ENCODE measurements at regions of chr3 and their contacts with region 1.

Region 1: GRCh38 chr3:41961750-41962679 is at the start of gene ULK4:
- DNase-seq: peak; percentile 90
- ATAC-seq: peak; percentile 92
- H3K4me3 Mint-ChIP-seq: peak within 1 kb of the TSS; percentile 98
- H3K27ac Mint-ChIP-seq: peak within 1 kb of the TSS; percentile 91
- H3K4me1 Mint-ChIP-seq: peaks cover 14% of the 10 kb centered on the region
- H3K27me3 Mint-ChIP-seq: no peaks in the 10 kb centered on the region
- total RNA-seq, gene ULK4: 18.6 to 19.0 TPM

Region 2: DNA sequence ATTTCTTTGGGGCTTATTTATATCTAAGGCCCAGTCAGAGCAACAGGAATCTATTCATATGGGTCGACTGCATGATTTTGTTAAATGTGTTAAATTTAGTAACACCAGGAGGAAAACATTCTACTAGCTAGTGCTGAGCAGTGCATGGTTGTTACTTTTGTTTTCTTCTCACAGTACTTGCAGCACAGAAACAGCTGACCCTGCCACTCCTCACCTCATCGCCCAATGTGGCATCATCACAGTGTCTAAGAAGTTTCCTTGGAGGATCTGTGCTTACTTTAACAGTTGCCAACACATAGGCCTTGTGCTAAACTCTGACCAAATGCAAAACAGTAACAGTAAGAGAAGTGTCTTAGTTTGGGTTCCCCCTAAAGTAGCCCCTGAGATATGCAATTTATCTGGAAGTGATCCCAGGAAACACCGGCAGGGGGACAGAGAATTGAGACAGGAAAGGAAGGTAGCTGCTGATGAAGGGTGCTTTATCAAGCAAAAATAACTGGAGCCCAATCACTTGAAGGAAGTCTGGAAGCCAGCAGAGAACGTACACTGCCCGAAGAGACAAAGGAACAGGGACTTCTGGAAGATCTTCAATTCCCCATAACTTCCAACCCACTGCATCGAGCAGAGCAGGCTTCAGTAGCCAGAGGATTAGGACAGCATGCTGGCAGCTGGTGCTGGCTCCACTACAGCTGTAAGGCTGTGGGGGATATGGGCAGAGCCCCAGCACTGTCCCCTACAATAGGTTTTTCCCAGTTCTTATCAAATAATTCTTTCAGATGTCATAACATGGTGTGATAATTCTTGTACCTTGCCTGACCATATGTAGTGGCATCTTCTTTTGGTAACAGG is 35.9 kb after region 1 on chr3:
- POLR2A ChIA-PET with region 1: no interaction called
- DNase-seq: no peak
- ATAC-seq: no peak
- H3K4me3 Mint-ChIP-seq: no peak overlapping the region
- H3K27ac Mint-ChIP-seq: no peak overlapping the region
- H3K4me1 Mint-ChIP-seq: peaks cover 4% of the 10 kb centered on the region
- H3K27me3 Mint-ChIP-seq: peaks cover 2% of the 10 kb centered on the region

Region 3: DNA sequence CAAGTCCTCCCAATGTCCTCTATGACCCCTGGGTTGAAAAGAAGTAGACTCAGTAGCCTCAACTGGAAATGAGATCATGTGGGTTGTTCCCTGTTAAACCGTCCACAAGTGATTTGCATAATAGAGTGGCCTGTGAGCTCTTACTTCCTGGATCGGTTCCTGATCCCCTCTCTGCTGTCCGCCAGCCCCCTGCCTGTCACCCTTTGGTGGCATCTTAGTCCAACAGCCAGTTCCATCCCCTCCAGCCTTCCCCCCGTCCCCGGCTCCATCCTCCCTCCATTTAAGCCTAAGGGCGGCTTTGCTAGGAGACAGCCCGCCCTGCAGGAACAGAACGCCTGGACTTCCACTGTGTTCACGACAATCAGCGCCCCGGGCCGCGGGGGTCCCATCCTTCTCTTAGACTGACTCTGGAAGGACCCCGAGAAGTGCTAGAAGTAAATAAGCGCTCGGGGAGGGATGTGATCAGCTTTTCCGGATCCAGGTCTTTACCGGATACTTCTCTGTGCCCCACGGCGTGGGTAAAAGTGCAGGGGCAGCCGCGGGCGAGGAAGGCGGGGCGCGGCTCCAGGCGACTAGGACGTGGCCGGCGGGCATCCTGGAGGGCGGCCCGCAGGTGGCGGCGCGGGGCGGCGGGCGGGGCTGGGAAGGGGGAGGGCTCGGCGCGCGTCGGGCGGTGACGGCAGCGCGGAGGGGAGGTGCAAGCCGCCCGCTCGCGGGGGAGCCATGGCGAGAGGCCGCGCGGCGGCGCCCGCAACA is 51.1 kb after region 1 on chr3:
- POLR2A ChIA-PET with region 1: interaction called, 11 read pairs
- DNase-seq: peak; percentile 81
- ATAC-seq: peak; percentile 82
- H3K4me3 Mint-ChIP-seq: peak overlapping the region; percentile 86
- H3K27ac Mint-ChIP-seq: peak overlapping the region; percentile 89
- H3K4me1 Mint-ChIP-seq: peaks cover 29% of the 10 kb centered on the region
- H3K27me3 Mint-ChIP-seq: no peaks in the 10 kb centered on the region